Ascending aorta (tissue), 2 donors: ENCODE measurements at regions of chr2 and their contacts with region 1.

Region 1: DNA sequence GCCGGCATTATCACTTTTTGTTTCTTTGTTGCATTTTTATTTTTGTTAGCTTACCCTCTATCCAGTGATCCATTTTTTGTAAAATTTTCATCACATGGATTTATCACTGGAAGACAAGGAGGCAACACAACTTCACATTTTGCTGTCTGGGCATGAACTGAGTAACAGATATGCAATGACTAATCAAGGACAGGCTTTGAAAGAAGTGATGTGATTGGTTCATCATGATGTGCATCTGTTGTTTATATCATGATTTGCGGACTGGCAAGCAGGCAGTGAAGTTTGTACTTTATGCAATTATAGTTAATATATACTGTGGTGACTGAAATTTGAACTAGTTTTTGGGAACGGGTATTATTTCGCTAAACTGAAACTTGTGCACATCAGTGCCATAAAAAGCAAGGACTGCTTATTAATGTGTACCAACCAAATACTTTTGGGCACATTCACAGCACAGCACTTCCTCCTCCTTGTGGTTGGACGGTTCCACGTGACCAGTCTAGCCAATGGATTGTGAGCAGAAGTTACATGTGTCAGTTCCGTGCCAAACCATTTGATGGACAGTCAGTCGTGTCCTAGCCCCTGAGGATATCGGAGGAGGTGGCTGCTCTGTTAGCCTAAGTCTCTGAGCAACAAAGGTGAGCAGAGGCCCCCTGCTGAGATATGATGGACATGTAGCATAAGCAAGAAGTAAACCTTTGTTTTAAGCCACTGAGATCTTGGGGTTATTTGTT is 201.4 kb upstream of the SIX2 start:
- DNase-seq: no peak
- H3K4me3 ChIP-seq: no peak overlapping the region
- H3K27ac ChIP-seq: no peak overlapping the region
- H3K4me1 ChIP-seq: no peaks in the 10 kb centered on the region
- H3K27me3 ChIP-seq: no peaks in the 10 kb centered on the region
- CTCF ChIP-seq: no peak

Region 2: DNA sequence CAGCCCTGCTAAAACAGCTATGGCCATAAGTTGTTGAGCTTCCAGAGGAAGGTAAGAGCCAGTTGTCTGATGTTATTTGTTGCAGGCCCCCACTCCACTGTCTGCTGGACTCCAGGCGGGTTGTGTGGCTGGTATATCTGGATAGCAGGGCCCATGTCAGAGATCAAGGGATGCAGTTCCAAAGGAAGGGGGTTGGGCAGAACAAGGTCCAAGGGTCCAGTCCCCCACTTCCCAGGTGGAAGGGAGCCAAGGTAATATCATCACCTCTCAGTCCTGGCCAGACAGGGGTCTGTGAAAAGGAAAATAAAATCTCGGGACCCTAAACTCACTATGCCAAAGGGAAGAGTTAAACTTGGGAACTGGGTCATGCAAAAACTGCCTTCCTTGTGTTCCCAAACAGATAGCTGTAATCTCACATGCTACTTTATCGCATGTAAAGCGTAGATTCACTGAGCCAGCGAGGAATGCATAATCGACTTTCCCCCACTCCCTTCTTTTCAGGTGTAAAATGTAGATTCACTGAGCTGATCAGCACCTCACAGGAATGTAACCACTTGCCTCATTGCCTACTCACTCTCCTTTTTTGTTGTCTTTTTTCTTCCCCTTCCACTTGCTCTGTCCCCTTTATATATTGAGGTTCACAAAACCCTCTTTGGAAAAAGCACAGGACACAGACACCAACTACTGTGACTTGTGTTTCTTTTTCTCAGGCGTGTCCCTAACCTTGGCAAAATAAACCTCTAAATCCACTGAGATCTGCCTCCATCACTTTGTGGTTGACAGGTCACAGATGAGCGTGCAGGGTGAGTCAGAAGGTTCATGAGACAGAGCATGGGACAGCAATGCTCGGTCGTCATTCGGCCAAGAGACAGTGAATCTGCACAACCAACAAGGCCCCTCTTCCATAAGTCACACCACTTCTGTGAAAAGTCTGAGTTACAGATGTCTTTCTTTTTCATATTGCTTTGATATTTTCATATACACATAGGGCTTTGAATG is 53.9 kb after region 1 on chr2:
- intact Hi-C with region 1: loop called (anchors 5 kb)
- DNase-seq: no peak
- H3K4me3 ChIP-seq: no peak overlapping the region
- H3K27ac ChIP-seq: no peak overlapping the region
- H3K4me1 ChIP-seq: peaks cover 0 to 7% of the 10 kb centered on the region in 2 donors
- H3K27me3 ChIP-seq: no peaks in the 10 kb centered on the region
- CTCF ChIP-seq: no peak